ENCODE measurements at regions of chr6 and their contacts with region 1.

Region 1: GRCh38 chr6:27809939-27810767 is 102.0 kb downstream of the OR2B2 start:
- DNase-seq: peak; percentile 99
- H3K4me3 ChIP-seq: peak overlapping the region; percentile 4 to 77 (median 70)
- H3K27ac ChIP-seq: peak overlapping the region; percentile 59
- H3K4me1 ChIP-seq: peaks cover 29% of the 10 kb centered on the region
- H3K27me3 ChIP-seq: no peaks in the 10 kb centered on the region
- CTCF ChIP-seq: peak in 1 of 2 donors; percentile 25
- POLR2A ChIP-seq: peak; percentile 99

Region 2: DNA sequence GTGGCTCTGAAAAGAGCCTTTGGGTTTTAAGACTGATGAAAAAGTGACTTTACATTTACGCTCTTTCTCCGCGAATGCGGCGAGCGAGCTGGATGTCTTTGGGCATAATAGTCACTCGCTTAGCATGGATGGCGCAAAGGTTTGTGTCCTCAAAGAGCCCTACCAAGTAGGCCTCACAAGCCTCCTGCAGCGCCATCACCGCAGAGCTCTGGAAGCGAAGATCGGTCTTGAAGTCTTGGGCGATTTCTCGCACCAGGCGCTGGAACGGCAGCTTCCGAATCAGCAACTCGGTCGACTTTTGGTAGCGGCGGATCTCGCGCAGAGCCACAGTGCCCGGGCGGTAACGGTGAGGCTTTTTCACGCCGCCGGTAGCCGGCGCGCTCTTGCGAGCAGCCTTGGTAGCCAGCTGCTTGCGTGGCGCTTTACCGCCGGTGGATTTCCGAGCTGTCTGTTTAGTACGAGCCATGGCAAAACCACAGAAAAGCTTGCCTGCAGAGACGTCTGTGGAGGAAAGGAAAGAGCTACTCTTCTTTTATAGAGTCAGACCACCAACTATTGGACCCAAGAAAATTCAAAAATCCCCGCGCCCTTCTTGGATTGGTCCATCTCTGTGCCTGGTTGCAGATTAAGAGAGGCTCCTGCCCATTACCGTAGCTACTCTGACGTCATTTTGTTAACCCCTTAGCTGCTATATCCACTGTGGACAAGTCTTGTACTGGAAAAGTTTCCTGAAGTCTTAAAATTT is 1778.4 kb before region 1 on chr6:
- CTCF ChIA-PET with region 1: no interaction called
- POLR2A ChIA-PET with region 1: interaction called, 3 read pairs
- dilution Hi-C with region 1: no loop called
- intact Hi-C with region 1: loop called (anchors 5 kb)
- DNase-seq: peak; percentile 96
- H3K4me3 ChIP-seq: peak overlapping the region; percentile 45 to 78 (median 47)
- H3K27ac ChIP-seq: peak overlapping the region; percentile 88
- H3K4me1 ChIP-seq: peaks cover 33% of the 10 kb centered on the region
- H3K27me3 ChIP-seq: no peaks in the 10 kb centered on the region
- CTCF ChIP-seq: peak in 1 of 2 donors; percentile 29
- POLR2A ChIP-seq: peak; percentile 99

Region 3: GRCh38 chr6:26285143-26286134 is 1524.7 kb before region 1 on chr6:
- CTCF ChIA-PET with region 1: no interaction called
- POLR2A ChIA-PET with region 1: no interaction called
- dilution Hi-C with region 1: no loop called
- intact Hi-C with region 1: loop called (anchors 10 kb)
- DNase-seq: peak; percentile 98
- H3K4me3 ChIP-seq: peak overlapping the region; percentile 5 to 68 (median 58)
- H3K27ac ChIP-seq: peak overlapping the region; percentile 68
- H3K4me1 ChIP-seq: no peaks in the 10 kb centered on the region
- H3K27me3 ChIP-seq: no peaks in the 10 kb centered on the region
- CTCF ChIP-seq: no peak
- POLR2A ChIP-seq: peak; percentile 99

Region 4: DNA sequence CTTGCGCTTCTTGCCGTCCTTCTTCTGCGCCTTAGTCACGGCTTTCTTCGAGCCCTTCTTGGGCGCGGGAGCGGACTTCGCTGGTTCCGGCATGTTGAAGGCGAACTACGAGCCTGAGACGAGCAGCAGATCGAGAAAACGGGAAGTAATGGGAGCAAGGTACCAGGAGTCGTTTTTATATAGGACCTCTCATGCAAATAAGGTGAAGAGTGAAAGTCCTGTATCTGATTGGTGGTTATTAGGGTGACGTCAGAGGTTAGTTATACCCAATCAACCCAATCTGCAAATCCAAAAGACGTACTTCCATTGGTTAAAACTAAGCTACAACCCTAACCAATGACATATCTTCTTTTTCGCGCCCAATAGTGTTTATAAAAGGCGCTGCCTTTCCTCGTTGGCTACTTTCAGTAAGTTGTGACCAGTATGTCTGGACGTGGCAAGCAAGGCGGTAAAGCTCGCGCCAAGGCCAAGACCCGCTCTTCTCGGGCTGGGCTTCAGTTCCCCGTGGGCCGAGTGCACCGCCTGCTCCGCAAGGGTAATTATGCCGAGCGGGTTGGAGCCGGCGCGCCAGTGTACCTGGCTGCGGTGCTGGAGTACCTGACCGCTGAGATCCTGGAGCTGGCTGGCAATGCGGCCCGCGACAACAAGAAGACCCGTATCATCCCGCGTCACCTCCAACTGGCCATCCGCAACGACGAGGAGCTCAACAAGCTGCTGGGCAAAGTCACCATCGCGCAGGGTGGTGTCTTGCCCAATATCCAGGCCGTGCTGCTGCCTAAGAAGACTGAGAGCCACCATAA is 663.2 kb before region 1 on chr6:
- CTCF ChIA-PET with region 1: interaction called, 5 read pairs
- POLR2A ChIA-PET with region 1: interaction called, 35 read pairs
- dilution Hi-C with region 1: no loop called
- intact Hi-C with region 1: loop called (anchors 1 kb)
- DNase-seq: peak; percentile 99
- H3K4me3 ChIP-seq: peak overlapping the region in 2 of 3 experiments; percentile 21 to 46
- H3K27ac ChIP-seq: peak overlapping the region; percentile 66
- H3K4me1 ChIP-seq: peaks cover 5% of the 10 kb centered on the region
- H3K27me3 ChIP-seq: peaks cover 0 to 1% of the 10 kb centered on the region in 2 experiments
- CTCF ChIP-seq: no peak
- POLR2A ChIP-seq: peak; percentile 95

Region 5: DNA sequence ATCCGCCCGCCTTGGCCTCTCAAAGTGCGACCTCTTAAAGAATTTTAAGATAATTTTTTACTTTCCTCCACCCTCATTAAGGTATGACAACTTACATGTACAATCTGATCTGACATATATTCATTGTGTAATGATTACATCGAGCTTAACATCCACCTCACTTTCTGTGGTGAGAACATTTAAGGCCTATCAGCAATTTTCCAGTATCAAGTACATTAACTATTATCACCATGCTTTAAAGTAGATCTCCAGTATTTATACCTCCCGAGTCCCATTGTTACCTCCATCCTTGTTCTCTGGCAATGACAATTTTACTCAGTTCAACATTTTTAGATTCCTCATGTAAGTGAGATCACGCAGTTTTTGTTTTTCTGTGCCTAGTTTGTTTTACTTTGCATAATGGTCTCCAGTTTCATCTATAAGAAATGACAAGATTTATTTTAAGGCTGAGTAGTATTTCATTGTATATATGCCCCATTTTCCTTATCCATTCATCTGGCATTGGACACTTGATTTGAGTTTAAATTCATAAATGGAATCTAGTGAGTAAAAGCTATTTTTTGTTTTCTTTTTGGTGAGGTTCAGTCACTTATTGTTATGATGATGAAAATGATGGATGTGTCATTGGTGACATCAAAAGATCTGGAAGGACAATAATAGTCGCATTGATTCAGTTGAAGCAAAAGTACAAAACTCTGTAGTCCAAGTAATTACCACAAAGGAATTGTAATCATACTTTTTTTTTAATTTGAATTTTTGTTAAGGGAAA is 15.1 kb after region 1 on chr6:
- CTCF ChIA-PET with region 1: interaction called, 8 read pairs
- POLR2A ChIA-PET with region 1: interaction called, 27 read pairs
- dilution Hi-C with region 1: no loop called
- intact Hi-C with region 1: loop called (anchors 1 kb)
- DNase-seq: peak; percentile 49
- H3K4me3 ChIP-seq: peak overlapping the region; percentile 44 to 97 (median 73)
- H3K27ac ChIP-seq: peak overlapping the region; percentile 91
- H3K4me1 ChIP-seq: peaks cover 8% of the 10 kb centered on the region
- H3K27me3 ChIP-seq: no peaks in the 10 kb centered on the region
- CTCF ChIP-seq: no peak
- POLR2A ChIP-seq: no peak

Region 6: DNA sequence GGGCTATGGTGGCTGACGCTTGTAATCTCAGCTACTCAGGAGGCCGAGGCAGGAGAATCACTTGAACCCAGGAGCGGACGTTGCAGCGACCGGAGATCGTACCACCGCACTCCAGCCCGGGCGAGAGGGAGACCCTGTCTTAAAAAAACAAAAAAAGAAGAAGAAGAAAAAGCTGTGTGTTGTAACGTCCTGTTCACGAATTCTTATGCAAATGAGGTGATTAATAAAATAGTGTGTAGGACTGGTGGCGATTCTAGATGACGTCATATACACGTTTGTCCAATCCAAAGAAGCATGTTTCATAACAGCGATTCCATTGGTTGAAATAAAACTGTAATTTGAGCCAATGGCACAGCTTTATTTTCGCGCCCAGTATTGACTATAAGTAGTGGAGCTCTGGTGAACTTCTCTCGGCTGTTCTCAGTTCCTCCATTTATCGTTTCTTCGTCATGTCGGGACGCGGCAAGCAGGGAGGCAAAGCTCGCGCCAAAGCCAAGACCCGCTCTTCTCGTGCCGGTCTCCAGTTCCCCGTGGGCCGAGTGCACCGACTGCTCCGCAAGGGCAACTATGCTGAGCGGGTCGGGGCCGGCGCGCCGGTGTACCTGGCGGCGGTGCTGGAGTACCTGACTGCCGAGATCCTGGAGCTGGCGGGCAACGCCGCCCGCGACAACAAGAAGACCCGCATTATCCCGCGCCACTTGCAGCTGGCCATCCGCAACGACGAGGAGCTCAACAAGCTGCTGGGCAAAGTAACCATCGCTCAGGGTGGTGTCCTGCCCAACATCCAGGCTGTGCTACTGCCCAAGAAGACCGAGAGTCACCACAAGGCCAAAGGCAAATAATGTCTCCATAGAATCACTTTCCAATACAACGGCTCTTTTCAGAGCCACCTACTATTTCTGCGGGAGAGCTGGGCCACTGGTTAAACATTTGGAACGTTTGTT is 55.0 kb after region 1 on chr6:
- CTCF ChIA-PET with region 1: interaction called, 10 read pairs
- POLR2A ChIA-PET with region 1: interaction called, 24 read pairs
- dilution Hi-C with region 1: no loop called
- intact Hi-C with region 1: loop called (anchors 1 kb)
- DNase-seq: peak; percentile 98
- H3K4me3 ChIP-seq: peak overlapping the region; percentile 60 to 71 (median 66)
- H3K27ac ChIP-seq: peak overlapping the region; percentile 82
- H3K4me1 ChIP-seq: peaks cover 10% of the 10 kb centered on the region
- H3K27me3 ChIP-seq: no peaks in the 10 kb centered on the region
- CTCF ChIP-seq: no peak
- POLR2A ChIP-seq: peak; percentile 77